ENCODE measurements at regions of chr12 and their contacts with region 1.

Region 1: DNA sequence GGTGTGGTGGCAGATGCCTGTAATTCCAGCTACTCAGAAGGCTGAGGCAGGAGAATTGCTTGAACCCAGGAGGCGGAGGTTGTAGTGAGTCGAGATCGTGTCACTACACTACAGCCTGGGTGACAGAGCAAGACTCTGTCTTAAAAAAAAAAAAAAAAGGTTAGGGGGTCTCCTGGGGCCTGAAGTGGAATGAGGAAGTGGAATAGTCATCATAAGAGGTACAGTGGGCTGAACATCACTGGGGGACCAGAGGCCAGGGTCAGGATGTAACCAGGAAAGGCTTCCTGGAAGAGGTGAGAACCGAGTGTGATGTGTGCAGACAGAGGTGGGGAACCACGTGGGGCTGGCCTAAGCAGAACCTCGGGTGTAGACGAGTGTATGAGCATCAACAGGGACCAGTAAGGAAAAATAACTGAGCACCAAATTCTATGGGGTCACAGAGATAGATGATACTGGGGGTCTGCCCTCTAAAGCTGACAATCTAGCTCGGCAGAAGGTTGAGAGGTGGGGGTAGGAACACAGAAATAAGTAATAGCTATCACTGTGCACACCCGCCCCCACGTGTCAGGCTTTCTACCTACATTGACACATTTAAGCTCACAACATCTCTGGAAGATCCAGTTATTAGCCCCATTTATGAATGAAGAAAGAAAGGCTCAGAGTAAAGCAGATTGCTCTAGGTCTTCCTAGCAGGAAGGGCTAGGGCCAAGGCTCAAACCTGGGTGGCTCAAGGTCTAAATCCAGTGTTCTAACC is 5.0 kb upstream of the COX6A1 start:
- DNase-seq: no peak
- H3K4me3 Mint-ChIP-seq: no peak overlapping the region
- H3K27ac Mint-ChIP-seq: no peak overlapping the region
- H3K4me1 Mint-ChIP-seq: peaks cover 11% of the 10 kb centered on the region
- H3K27me3 Mint-ChIP-seq: peaks cover 28% of the 10 kb centered on the region

Region 2: DNA sequence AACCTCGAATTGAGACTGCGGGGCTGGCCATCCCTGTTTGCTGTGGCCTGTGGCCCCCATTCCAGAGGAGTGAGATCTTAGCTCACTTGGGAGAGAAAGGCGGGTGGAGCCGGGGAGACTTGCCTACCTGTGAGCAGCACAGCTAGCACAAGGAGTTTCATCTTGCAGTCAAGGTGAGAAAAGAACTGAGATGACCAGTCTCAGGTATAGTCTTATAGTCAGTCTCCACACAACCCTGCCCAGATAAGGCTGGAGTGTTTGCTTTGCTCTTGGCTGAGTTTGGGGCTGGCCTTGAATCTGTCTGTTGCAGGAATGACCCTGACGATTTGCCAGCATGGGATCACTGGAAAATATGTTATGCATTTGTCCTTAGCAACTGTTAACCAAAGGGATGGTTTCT is 105.4 kb before region 1 on chr12 and contains the start of gene PLA2G1B:
- CTCF ChIA-PET with region 1: interaction called, 14 read pairs
- DNase-seq: no peak
- H3K4me3 Mint-ChIP-seq: no peak within 1 kb of the TSS
- H3K27ac Mint-ChIP-seq: no peak within 1 kb of the TSS
- H3K4me1 Mint-ChIP-seq: peaks cover 8% of the 10 kb centered on the region
- H3K27me3 Mint-ChIP-seq: peaks cover 50% of the 10 kb centered on the region

Region 3: GRCh38 chr12:120356567-120357030 is 76.3 kb before region 1 on chr12:
- CTCF ChIA-PET with region 1: interaction called, 19 read pairs
- DNase-seq: peak; percentile 81
- H3K4me3 Mint-ChIP-seq: no peak overlapping the region
- H3K27ac Mint-ChIP-seq: no peak overlapping the region
- H3K4me1 Mint-ChIP-seq: no peaks in the 10 kb centered on the region
- H3K27me3 Mint-ChIP-seq: peaks cover 48% of the 10 kb centered on the region

Region 4: DNA sequence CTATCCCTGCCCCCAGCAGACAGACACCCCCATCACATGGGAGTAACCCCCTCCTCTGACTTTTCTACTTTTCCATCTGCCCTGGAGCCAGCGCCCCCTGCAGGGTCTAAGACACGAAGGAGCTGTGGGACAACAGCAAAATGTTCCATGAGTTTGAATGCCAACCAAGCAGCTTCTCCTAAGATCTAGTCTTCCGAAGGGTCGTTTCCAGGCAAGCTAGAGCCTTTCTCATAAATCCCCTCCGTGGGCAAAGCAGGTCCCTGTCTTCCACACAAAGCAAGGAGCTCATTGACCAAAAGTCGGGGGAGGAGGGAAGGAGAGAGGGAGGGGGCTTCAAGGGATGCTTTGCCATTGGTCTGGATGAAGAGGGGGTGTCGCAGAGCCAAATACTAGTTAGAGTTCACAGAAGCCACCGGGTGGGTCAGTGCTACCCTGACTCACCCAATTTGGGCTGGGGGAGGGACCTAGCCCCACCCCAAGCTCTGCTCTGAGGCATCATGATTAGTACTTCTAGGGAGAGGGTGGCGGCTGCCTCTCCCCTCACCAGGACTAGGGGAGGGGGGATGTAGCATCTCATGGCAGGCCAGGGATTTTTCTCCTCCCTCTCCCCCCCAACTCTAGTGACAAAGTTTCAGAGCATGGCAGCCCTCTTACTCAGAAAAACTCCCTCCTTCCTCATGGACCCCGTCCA is 65.6 kb before region 1 on chr12:
- CTCF ChIA-PET with region 1: interaction called, 12 read pairs
- DNase-seq: no peak
- H3K4me3 Mint-ChIP-seq: peak overlapping the region; percentile 24
- H3K27ac Mint-ChIP-seq: no peak overlapping the region
- H3K4me1 Mint-ChIP-seq: peaks cover 17% of the 10 kb centered on the region
- H3K27me3 Mint-ChIP-seq: peaks cover 89% of the 10 kb centered on the region